ENCODE measurements at regions of chr4 and their contacts with region 1.

Region 1: GRCh38 chr4:95165926-95166524 is 382.7 kb downstream of the UNC5C start:
- DNase-seq: peak in 22 of 42 donors; percentile 25 to 85 (median 60)

Region 2: DNA sequence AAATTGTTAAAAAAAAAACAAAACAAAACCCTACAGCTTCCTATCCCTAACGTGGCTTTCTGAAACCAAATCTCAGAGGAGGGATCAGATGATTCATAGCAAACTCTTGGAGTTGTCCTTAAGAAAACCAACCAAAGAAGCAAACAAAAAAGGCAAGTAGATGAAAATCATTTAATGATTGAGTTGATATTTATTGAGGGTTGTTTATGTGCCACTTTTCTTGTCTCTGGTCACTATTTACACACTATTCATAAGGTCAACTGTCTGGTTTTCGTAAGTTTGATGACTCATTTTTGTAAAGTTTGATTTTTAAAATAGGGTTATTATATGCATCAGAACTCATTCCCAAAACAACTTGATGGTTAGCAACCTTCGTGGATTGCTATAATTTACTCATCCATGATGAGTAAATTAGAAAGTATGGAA is 249.3 kb after region 1 on chr4:
- intact Hi-C with region 1: no loop called
- DNase-seq: no peak

Region 3: DNA sequence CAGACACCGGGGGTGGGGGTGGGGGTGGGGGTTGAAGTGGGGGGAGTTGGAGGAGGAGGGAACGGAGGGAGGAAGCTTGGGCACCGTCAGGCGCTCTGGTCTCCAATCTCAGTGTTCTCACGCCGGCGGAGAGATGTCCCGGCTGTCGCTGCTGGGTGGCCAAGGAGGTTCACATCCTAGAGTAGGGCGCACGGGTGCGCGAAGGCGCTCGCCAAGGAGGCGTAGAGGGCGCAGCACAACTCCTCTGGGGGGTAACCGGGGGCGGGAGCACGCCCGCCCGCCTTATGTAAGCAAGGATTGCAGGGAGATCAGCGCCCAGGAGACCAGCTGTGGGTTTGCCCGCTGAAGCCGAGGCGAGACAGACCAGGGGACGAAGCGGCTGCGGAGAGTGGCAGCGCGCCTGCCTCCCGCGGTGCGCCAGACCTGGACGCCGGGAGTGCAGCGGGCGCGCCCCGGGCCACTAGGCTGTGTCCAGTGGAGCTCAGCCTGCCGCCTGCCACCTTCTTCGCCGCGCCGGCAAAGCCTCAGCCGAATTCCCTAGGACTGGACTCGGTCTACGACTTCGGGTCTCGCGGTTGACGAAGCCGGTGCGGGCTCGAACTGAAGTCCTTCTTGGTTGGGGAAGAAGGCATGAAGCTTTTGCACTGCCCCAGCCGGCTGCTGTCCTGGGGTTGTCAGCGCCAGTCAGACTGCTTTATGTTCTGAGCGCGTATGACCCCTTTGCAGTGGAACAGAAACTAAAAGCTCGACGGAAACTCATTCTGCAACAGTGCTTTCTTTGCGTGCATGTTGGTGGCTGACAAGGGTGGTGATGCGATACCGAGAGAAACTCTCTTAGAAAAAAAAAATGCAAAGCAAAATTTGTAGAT is 383.5 kb after region 1 on chr4:
- intact Hi-C with region 1: loop called (anchors 5 kb)
- DNase-seq: peak; percentile 54 to 92 (median 82)

Region 4: DNA sequence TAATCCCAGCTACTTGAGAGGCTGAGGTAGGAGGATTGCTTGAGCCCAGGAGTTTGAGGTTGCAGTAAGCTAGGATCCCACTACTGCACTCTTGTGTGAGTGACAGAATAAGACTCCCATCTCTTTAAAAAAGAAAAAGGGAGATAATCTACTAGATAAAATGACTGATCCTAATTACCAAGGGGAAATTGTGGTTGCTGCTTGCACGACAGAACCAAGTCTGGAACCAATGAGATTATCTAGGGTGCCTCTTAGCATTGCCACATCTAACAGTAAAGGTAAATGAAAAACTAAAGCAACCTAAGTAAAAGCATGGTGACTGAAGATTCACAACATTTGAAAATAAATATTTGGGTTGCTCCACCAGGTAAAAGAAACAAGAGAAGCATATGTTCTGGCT is 859.0 kb after region 1 on chr4:
- intact Hi-C with region 1: loop called (anchors 10 kb)
- DNase-seq: no peak

Measured in head of caudate nucleus (tissue), 42 donors.